Endothelial cell of umbilical vein (primary cell): ENCODE measurements at regions of chr3 and their contacts with region 1.

Region 1: GRCh38 chr3:6254490-6254889 is 606.4 kb upstream of the GRM7 start:
- DNase-seq: no peak
- H3K4me3 ChIP-seq: no peak overlapping the region
- H3K27ac ChIP-seq: no peak overlapping the region
- H3K4me1 ChIP-seq: no peaks in the 10 kb centered on the region
- H3K27me3 ChIP-seq: no peaks in the 10 kb centered on the region
- CTCF ChIP-seq: no peak
- POLR2A ChIP-seq: no peak

Region 2: GRCh38 chr3:6229778-6230410 is 24.6 kb before region 1 on chr3:
- CTCF ChIA-PET with region 1: no interaction called
- POLR2A ChIA-PET with region 1: no interaction called
- dilution Hi-C with region 1: no loop called
- intact Hi-C with region 1: loop called (anchors 1 kb)
- DNase-seq: no peak
- H3K4me3 ChIP-seq: no peak overlapping the region
- H3K27ac ChIP-seq: no peak overlapping the region
- H3K4me1 ChIP-seq: no peaks in the 10 kb centered on the region
- H3K27me3 ChIP-seq: no peaks in the 10 kb centered on the region
- CTCF ChIP-seq: no peak
- POLR2A ChIP-seq: no peak

Region 3: DNA sequence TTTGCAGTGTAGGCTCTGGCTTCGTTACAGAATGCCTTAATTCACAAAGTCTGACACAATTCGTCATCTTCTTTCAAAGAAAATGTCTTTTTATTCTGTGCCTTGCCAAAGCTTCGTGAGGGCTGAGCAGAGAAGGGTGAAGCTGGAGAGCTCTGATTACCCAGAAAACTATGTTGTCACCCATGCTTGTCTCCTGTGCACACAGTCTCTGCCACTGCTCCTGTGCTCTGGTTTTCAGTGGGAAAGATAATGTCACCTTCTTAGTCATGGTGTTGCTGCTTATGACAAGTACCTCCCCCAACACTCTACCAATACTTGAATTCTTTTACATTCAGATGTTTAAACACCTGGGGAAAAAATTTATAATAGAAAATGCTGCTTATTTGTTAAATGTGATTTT is 97.3 kb after region 1 on chr3:
- CTCF ChIA-PET with region 1: no interaction called
- POLR2A ChIA-PET with region 1: no interaction called
- dilution Hi-C with region 1: no loop called
- intact Hi-C with region 1: no loop called
- DNase-seq: no peak
- H3K4me3 ChIP-seq: no peak overlapping the region
- H3K27ac ChIP-seq: no peak overlapping the region
- H3K4me1 ChIP-seq: no peaks in the 10 kb centered on the region
- H3K27me3 ChIP-seq: no peaks in the 10 kb centered on the region
- CTCF ChIP-seq: no peak
- POLR2A ChIP-seq: no peak